Thyroid gland (tissue), 4 donors: ENCODE measurements at regions of chr7 and their contacts with region 1.

Region 1: DNA sequence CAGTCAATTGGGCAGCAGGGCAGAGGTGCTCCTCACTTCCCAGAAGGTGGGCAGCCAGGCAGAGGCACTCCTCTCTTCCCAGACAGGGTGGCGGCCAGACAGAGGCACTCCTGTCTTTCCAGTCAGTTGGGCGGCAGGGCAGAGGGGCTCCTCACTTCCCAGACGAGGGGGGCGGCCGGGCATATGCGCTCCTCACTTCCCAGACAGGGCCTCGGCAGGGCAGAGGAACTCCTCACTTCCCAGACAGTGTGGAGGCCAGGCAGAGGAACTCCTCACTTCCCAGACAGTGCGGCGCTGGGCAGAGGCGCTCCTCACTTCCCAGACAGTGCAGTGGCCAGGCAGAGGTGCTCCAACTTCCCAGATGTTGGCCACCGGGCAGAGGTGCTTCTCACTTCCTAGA is 33.4 kb upstream of the SEC61G start:
- DNase-seq: no peak
- H3K4me3 ChIP-seq: no peak overlapping the region
- H3K27ac ChIP-seq: no peak overlapping the region
- H3K4me1 ChIP-seq: peaks cover 0 to 6% of the 10 kb centered on the region in 2 donors
- H3K27me3 ChIP-seq: no peaks in the 10 kb centered on the region
- CTCF ChIP-seq: no peak
- POLR2A ChIP-seq: no peak

Region 2: DNA sequence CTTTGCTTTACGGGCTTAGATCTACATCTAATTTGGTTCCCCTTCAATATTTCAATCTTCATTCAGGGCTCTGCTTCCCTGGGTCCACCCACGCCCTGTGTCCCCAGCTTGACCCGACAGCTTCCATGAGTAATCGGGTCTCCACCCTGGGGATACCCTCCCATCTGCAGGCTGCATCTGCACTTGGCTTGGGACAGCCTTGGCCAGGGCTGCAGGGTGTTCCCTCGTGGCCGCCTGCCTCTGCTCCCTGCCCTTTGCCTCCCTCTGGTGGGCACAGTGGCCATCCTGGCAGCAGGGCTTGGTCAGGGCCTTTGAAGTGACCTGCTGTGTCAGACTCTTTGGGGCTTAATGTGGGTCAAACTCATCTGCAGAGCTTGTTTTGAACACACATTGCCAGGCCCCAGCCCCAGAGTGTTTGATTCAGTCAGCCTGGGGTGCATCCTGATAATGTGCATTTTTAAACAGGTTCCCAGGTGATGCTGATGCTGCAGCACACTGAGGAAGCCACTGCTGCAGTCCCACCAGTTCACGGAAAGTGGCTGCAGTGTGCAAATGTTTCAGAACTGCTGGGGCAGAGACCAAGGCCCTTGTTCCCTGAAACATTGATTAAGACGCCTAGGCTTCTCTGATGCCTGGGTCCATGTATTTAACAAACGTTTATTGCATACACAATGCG is 47.3 kb after region 1 on chr7:
- intact Hi-C with region 1: loop called (anchors 5 kb)
- DNase-seq: peak; percentile 55 to 68
- H3K4me3 ChIP-seq: no peak overlapping the region
- H3K27ac ChIP-seq: no peak overlapping the region
- H3K4me1 ChIP-seq: peaks cover 0 to 12% of the 10 kb centered on the region in 2 donors
- H3K27me3 ChIP-seq: no peaks in the 10 kb centered on the region
- CTCF ChIP-seq: peak; percentile 36 to 64 (median 46)
- POLR2A ChIP-seq: no peak